ENCODE measurements at regions of chr6 and their contacts with region 1.

Region 1: DNA sequence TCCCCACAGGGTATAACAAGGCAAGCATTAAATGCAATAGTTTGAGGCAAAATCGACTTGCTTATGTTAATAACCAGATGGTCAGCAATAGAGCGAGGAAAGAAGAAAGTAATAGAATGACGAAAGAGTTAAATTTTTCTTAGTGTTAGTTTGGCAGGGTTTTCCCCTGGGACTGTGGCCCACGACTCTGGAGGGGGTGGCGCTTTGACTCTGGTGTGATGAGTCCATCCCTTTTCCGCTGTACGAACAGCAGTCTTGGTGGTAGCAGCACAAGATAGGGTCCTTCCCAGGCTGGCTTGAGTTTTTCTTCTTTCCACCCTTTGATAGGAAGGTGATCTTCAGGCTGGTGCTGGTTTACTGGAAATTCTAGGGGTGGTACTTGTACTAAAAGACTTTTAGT is 69.2 kb upstream of the GMDS start:
- DNase-seq: no peak
- ATAC-seq: no peak

Region 2: DNA sequence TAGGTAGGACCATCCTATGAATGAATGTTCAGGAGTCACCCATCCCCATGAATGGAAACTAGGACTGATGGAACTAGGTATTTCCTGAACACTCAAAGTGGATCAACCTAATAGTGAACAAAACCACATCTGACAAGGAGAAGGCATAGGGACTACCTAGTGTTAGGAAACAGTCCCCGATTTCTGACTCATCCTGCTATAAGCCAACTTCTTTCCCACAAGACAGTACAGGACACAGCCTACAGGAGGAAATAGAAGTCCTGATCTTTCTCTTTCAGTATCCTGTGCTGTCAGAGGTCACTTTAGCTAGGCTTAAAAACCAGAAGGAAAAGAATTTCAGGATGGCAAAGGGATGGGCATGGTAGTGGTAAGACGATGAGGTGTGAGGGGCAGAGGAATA is 49.7 kb before region 1 on chr6:
- intact Hi-C with region 1: no loop called
- DNase-seq: no peak
- ATAC-seq: no peak

Region 3: GRCh38 chr6:2274981-2275891 is 39.4 kb before region 1 on chr6:
- intact Hi-C with region 1: loop called (anchors 5 kb)
- DNase-seq: no peak
- ATAC-seq: no peak